ENCODE measurements at regions of chr2 and their contacts with region 1.

Region 1: GRCh38 chr2:99180755-99181623 is at the starts of genes MITD1 and MRPL30:
- DNase-seq: peak; percentile 96 to 98 (median 97)
- H3K4me3 ChIP-seq: peak within 1 kb of the TSS; percentile 86 to 100 (median 95)
- H3K27ac ChIP-seq: peak within 1 kb of the TSS; percentile 79 to 92
- H3K4me1 ChIP-seq: peaks cover 10 to 23% (median 16%) of the 10 kb centered on the region in 4 experiments
- H3K27me3 ChIP-seq: no peaks in the 10 kb centered on the region

Region 2: GRCh38 chr2:99141110-99142108 is 39.6 kb before region 1 on chr2 and contains the start of gene C2orf15:
- CTCF ChIA-PET with region 1: no interaction called
- POLR2A ChIA-PET with region 1: interaction called, 10 read pairs
- DNase-seq: peak; percentile 90 to 96 (median 96)
- H3K4me3 ChIP-seq: peak within 1 kb of the TSS; percentile 79 to 95 (median 85)
- H3K27ac ChIP-seq: peak within 1 kb of the TSS in 1 of 2 experiments; percentile 75
- H3K4me1 ChIP-seq: peaks cover 5 to 17% (median 15%) of the 10 kb centered on the region in 4 experiments
- H3K27me3 ChIP-seq: no peaks in the 10 kb centered on the region

Region 3: DNA sequence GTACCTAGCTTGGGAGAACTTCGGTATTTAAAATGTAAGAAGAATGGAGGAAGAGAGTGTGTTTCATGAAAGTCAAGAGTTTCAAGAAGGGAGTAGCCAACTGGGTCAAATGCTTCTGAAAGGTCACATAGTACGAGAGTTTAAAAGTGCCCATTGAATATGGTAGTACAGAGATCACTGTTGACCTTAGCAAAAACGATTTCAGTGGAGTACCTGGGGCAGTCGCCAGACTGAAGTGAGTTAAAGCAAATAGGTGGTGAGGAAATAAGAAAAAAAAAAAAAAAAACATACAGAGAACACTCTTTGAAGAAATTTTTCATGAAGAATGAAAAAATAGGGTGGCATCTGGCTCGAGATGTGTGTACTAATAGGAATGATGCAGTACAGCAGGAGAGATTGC is 14.8 kb before region 1 on chr2:
- CTCF ChIA-PET with region 1: interaction called, 15 read pairs
- POLR2A ChIA-PET with region 1: no interaction called
- DNase-seq: no peak
- H3K4me3 ChIP-seq: no peak overlapping the region
- H3K27ac ChIP-seq: no peak overlapping the region
- H3K4me1 ChIP-seq: peaks cover 0 to 4% (median 0%) of the 10 kb centered on the region in 4 experiments
- H3K27me3 ChIP-seq: no peaks in the 10 kb centered on the region

Region 4: DNA sequence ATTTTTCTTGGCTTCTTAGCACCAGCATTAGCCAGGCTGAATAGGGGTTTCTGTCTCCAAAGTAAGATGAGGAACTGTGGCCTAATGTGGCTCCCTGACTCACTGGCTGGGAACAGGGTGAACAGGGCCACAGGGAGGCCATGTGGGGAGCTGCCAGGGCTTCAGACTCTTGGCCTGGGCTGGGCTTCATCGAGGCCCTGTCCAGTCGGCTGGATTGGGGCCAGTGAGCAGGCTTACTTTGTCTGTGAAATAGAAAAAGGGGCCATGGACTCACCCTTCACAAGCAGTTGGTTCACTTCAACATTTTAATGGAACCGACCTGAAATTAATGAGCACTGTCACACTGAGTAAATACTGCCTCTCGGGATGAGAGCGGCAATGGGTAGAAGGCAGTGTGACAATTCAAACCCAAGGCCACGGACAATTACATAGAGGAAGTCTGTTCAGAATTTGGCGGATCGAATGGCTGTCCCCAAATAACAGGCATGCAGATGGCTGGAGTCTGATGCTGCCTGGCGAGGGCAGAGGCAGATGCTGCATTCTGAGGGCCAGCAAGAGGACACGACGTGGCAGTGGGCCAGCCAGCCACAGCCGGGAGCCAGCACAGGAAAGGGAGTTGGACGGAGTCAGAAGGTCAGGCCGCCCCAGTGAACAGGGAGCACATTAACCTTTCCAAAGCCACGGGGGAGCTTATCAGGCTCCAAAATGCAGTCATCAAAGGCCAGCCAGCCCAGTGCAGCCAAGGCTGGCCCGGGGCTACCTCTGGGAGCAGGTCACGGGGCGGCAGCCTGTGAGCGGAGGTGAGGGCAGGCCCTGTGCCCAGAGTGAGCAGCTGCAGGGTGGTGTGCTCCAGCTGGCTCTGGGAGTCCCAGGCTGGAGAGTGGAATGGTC is 455.4 kb after region 1 on chr2:
- CTCF ChIA-PET with region 1: no interaction called
- POLR2A ChIA-PET with region 1: no interaction called
- DNase-seq: no peak
- H3K4me3 ChIP-seq: no peak overlapping the region
- H3K27ac ChIP-seq: no peak overlapping the region
- H3K4me1 ChIP-seq: no peaks in the 10 kb centered on the region
- H3K27me3 ChIP-seq: no peaks in the 10 kb centered on the region